Activated B cell treated with CpG ODN at 0.5 μM for 24 hours (primary cell): ENCODE measurements at regions of chr12 and their contacts with region 1.

Region 1: DNA sequence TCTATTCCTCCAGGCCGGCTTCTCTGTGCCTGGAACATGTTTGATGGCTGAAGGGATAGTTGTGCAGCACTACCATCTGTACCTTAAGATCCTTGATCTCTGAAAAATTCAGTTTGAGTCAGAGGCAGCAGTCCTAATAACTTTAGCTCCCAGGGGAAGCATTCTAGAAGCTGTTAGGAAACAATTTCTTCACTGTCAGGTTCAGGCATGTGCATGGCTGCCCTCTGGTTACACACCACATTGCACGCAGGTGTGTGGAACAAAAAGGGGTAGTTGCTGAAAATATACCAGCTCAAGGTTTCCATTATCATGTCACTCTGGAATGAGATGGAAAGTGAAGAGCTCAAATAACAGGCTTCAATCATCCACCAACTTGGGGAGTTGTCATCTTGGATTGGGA is 80.1 kb downstream of the CHST11 start:
- DNase-seq: no peak
- ATAC-seq: peak; percentile 82
- H3K4me3 Mint-ChIP-seq: no peak overlapping the region
- H3K27ac Mint-ChIP-seq: no peak overlapping the region
- H3K4me1 Mint-ChIP-seq: peaks cover 89% of the 10 kb centered on the region
- H3K27me3 Mint-ChIP-seq: no peaks in the 10 kb centered on the region
- CTCF ChIP-seq: no peak

Region 2: DNA sequence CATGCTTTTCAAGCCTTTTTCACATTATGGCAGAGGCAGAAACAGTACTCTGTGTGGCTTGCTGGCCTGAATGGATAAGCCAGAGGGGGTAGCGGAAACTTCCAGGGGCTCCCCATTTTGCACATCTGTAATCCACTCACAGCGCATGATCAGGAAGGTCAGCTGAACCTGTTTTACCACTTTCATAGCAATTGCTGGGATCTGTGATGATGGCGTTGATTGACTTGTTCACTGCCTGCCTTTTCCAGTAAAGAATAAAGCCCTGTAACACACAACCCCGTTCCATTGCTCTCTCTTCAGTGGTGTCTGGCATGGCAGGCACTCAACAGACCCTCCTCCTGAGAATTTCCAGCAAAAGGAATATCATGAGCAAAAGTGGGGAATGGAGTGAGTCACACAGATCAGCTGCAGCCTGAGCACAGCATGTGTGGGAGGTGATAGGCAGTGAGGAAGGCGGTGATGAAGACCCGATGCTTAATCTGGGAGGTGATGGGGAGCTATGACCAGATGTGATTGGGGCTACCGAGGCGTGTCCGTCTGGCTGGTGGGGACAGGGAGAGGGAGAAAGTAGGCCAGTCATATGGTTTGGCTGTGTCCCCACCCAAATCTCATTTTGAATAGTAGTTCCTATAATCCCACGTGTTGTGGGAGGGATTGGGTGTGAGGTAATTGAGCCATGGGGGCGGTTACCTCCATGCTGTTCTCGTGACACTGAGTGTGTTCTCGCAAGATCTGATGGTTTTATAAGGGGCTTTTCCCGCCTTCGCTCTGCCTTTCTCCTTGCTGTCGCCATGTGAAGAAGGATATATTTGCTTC is 124.8 kb before region 1 on chr12:
- CTCF ChIA-PET with region 1: no interaction called
- POLR2A ChIA-PET with region 1: no interaction called
- intact Hi-C with region 1: no loop called
- DNase-seq: no peak
- ATAC-seq: peak; percentile 37
- H3K4me3 Mint-ChIP-seq: no peak overlapping the region
- H3K27ac Mint-ChIP-seq: no peak overlapping the region
- H3K4me1 Mint-ChIP-seq: peaks cover 19% of the 10 kb centered on the region
- H3K27me3 Mint-ChIP-seq: no peaks in the 10 kb centered on the region
- CTCF ChIP-seq: no peak

Region 3: GRCh38 chr12:104549815-104550480 is 13.1 kb after region 1 on chr12:
- CTCF ChIA-PET with region 1: no interaction called
- POLR2A ChIA-PET with region 1: no interaction called
- intact Hi-C with region 1: loop called (anchors 2 kb)
- DNase-seq: no peak
- ATAC-seq: no peak
- H3K4me3 Mint-ChIP-seq: no peak overlapping the region
- H3K27ac Mint-ChIP-seq: no peak overlapping the region
- H3K4me1 Mint-ChIP-seq: peaks cover 82% of the 10 kb centered on the region
- H3K27me3 Mint-ChIP-seq: no peaks in the 10 kb centered on the region
- CTCF ChIP-seq: no peak

Region 4: DNA sequence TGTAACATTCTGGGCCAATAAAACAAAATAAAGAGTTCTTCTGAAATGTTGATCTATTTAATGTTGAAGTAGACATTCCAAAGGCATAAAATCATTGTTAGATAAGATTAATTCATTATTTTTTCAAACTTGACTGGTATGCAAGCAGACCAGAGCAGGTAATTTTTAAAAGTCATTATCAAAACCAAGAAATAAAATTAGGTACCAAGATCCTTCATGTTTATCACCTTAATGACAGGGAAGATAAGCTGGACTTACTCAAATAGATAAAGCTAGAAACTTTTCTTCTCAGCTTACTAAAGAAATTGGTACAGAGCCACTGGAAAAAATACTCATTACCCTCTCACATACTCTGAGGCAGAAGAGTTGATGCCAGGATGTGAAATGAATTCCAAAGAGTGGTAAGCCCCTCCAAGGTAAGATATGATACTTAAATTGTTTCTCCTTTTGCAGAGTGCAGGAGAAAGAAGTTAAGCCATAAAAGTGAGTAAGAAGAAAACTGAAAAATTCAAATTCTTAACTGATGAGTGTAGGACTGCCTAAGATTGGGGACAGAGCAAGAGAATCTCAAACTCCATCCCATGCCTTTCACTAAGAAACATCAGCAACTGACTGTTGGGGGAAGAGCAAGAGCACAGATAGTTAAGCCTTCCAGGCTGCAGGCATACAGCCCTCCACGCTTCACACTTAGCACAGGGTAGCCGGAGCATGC is 309.4 kb after region 1 on chr12:
- CTCF ChIA-PET with region 1: no interaction called
- POLR2A ChIA-PET with region 1: no interaction called
- intact Hi-C with region 1: no loop called
- DNase-seq: no peak
- ATAC-seq: no peak
- H3K4me3 Mint-ChIP-seq: no peak overlapping the region
- H3K27ac Mint-ChIP-seq: no peak overlapping the region
- H3K4me1 Mint-ChIP-seq: no peaks in the 10 kb centered on the region
- H3K27me3 Mint-ChIP-seq: no peaks in the 10 kb centered on the region
- CTCF ChIP-seq: no peak